HCT116 (cell line): ENCODE measurements at regions of chr6 and their contacts with region 1.

Region 1: GRCh38 chr6:119349323-119350042 is at the start of gene MAN1A1:
- DNase-seq: peak; percentile 56
- ATAC-seq: peak; percentile 90
- H3K4me3 ChIP-seq: peak within 1 kb of the TSS; percentile 82 to 86
- H3K27ac ChIP-seq: peak within 1 kb of the TSS; percentile 78
- H3K4me1 ChIP-seq: peaks cover 12 to 15% of the 10 kb centered on the region in 2 experiments
- H3K27me3 ChIP-seq: no peaks in the 10 kb centered on the region
- CTCF ChIP-seq: no peak
- POLR2A ChIP-seq: peak; percentile 72
- RAD21 ChIP-seq: peak; percentile 5; the same call in 1 of the 2 replicates
- total RNA-seq, gene MAN1A1: 46.0 TPM

Region 2: DNA sequence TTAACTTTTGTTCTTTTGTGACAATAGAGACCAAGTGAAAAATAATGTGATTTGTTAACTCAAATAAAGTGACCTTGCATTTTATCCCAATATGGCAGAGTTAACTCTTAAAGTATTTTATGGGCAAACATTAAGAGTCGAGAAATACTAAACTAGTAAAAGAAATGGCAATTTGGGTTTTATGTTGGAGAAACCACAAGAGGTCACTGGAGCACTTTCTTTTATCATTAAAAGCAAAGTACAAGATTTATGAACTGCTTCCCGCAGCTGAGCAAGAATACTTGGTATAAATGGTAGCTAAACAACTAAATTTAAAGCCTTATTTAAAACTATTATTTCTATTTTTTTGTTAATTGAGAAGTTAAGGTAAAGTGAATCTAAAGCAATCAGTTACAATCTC is 381.1 kb before region 1 on chr6:
- CTCF ChIA-PET with region 1: no interaction called
- POLR2A ChIA-PET with region 1: no interaction called
- RAD21 ChIA-PET with region 1: no interaction called
- intact Hi-C with region 1: loop called (anchors 5 kb)
- DNase-seq: peak; percentile 12
- ATAC-seq: no peak
- H3K4me3 ChIP-seq: no peak overlapping the region
- H3K27ac ChIP-seq: no peak overlapping the region
- H3K4me1 ChIP-seq: no peaks in the 10 kb centered on the region
- H3K27me3 ChIP-seq: no peaks in the 10 kb centered on the region
- CTCF ChIP-seq: peak in 2 of 3 experiments; percentile 41 to 53; a peak in 2 of 6 replicates
- POLR2A ChIP-seq: no peak
- RAD21 ChIP-seq: peak; percentile 70

Region 3: GRCh38 chr6:119105282-119105681 is 244.2 kb before region 1 on chr6:
- CTCF ChIA-PET with region 1: no interaction called
- POLR2A ChIA-PET with region 1: no interaction called
- RAD21 ChIA-PET with region 1: no interaction called
- intact Hi-C with region 1: no loop called
- DNase-seq: no peak
- ATAC-seq: no peak
- H3K4me3 ChIP-seq: no peak overlapping the region
- H3K27ac ChIP-seq: no peak overlapping the region
- H3K4me1 ChIP-seq: no peaks in the 10 kb centered on the region
- H3K27me3 ChIP-seq: no peaks in the 10 kb centered on the region
- CTCF ChIP-seq: no peak
- POLR2A ChIP-seq: no peak
- RAD21 ChIP-seq: no peak

Region 4: GRCh38 chr6:119147101-119148053 is 202.1 kb before region 1 on chr6:
- CTCF ChIA-PET with region 1: interaction called, 26 read pairs
- POLR2A ChIA-PET with region 1: interaction called, 7 read pairs
- RAD21 ChIA-PET with region 1: no interaction called
- intact Hi-C with region 1: loop called (anchors 1 kb)
- DNase-seq: peak; percentile 96
- ATAC-seq: peak; percentile 86
- H3K4me3 ChIP-seq: peak overlapping the region; percentile 1 to 41
- H3K27ac ChIP-seq: peak overlapping the region; percentile 83
- H3K4me1 ChIP-seq: peaks cover 53 to 56% of the 10 kb centered on the region in 2 experiments
- H3K27me3 ChIP-seq: no peaks in the 10 kb centered on the region
- CTCF ChIP-seq: no peak
- POLR2A ChIP-seq: peak; percentile 28
- RAD21 ChIP-seq: peak; percentile 26

Region 5: GRCh38 chr6:119552021-119552420 is 202.5 kb after region 1 on chr6:
- CTCF ChIA-PET with region 1: no interaction called
- POLR2A ChIA-PET with region 1: no interaction called
- RAD21 ChIA-PET with region 1: no interaction called
- intact Hi-C with region 1: no loop called
- DNase-seq: no peak
- ATAC-seq: no peak
- H3K4me3 ChIP-seq: no peak overlapping the region
- H3K27ac ChIP-seq: no peak overlapping the region
- H3K4me1 ChIP-seq: no peaks in the 10 kb centered on the region
- H3K27me3 ChIP-seq: no peaks in the 10 kb centered on the region
- CTCF ChIP-seq: no peak
- POLR2A ChIP-seq: no peak
- RAD21 ChIP-seq: no peak

Region 6: DNA sequence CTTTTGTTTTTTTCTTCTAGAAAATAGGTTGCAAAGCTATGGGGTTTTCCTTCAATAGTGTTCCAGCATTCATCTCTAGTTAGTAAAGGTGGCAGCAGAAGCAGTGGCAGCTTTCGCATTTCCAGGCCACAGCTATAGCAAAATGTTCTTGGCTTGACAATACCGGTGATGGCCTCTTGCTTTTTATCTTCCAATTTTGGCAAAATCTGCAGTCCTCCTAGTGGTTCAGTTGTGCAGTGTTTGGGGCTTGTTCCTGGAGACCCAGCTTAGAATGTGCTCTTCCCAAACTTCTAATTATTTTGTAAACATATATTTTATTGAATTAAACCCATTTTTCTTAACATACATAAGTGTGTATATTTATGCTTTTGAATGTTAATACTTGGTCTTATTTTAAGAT is 370.7 kb after region 1 on chr6:
- CTCF ChIA-PET with region 1: interaction called, 8 read pairs
- POLR2A ChIA-PET with region 1: no interaction called
- RAD21 ChIA-PET with region 1: interaction called in 1 of 2 experiments, 4 read pairs
- intact Hi-C with region 1: loop called (anchors 5 kb)
- DNase-seq: peak; percentile 32
- ATAC-seq: peak; percentile 85
- H3K4me3 ChIP-seq: no peak overlapping the region
- H3K27ac ChIP-seq: no peak overlapping the region
- H3K4me1 ChIP-seq: no peaks in the 10 kb centered on the region
- H3K27me3 ChIP-seq: no peaks in the 10 kb centered on the region
- CTCF ChIP-seq: peak in 2 of 3 experiments; percentile 48 to 57; a peak in 4 of 6 replicates
- POLR2A ChIP-seq: no peak
- RAD21 ChIP-seq: peak; percentile 15

Region 7: DNA sequence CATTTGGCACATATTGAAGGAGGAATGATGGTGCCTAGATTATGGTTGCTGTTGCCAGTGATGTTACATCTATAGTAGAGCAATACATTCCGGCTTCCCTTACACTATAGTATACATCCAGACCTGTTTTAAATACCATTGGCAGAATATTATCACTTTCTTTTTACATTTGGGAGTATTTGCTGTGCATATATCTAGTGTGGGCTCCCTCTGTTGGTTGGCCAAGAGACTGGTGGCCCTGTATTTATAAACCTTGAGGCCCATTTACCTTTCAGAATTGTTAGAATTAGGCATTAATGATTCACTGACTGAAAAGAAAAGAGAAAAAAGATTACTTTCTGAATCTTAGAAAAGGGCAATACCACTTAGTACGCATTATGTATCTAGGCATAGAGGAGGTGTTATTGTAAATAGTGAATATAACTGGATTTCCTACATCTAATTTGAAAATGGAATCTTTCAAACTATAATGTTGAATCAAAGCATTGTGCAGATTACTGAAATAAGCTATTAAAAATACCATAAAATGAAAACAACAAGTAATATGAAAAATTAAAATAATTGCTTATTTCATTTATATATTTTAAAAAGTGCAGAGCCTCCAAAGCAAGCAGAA is 628.9 kb after region 1 on chr6:
- CTCF ChIA-PET with region 1: interaction called, 4 read pairs
- POLR2A ChIA-PET with region 1: no interaction called
- RAD21 ChIA-PET with region 1: interaction called in 1 of 2 experiments, 3 read pairs
- intact Hi-C with region 1: loop called (anchors 5 kb)
- DNase-seq: no peak
- ATAC-seq: peak; percentile 81
- H3K4me3 ChIP-seq: no peak overlapping the region
- H3K27ac ChIP-seq: no peak overlapping the region
- H3K4me1 ChIP-seq: no peaks in the 10 kb centered on the region
- H3K27me3 ChIP-seq: no peaks in the 10 kb centered on the region
- CTCF ChIP-seq: peak; percentile 50 to 75 (median 72); a peak in 5 of 6 replicates
- POLR2A ChIP-seq: no peak
- RAD21 ChIP-seq: peak; percentile 58

Region 8: DNA sequence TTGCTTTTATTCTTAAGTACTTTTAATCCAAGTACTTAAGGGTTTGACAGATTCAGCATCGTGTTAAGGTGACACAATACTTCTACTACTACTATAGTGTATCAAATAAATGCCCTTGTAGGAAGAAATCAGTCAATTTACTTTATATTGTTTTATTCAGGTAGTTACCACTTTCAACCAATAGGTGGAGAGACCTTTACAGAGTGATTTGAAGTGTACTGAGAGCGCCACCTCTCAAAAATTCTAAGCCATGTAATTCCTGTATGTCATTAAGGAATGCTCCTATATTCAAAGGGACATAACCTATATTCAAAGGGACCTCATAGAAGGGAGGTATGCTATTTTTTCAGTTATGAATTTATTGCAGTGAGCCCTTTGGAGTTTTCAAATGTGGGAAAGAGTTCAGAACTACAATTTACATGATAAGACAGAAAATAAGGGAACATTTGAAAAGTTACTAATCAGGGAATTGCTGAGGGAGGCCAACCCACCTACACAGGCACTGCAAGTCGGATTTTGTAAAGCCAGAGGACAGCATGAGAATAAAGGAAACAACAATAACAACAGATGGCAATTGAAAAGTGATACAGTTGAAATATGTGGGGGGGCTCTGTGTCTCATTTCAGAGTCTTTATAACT is 1029.2 kb after region 1 on chr6:
- CTCF ChIA-PET with region 1: no interaction called
- POLR2A ChIA-PET with region 1: no interaction called
- RAD21 ChIA-PET with region 1: no interaction called
- intact Hi-C with region 1: loop called (anchors 10 kb)
- DNase-seq: peak; percentile 70
- ATAC-seq: peak; percentile 93
- H3K4me3 ChIP-seq: no peak overlapping the region
- H3K27ac ChIP-seq: no peak overlapping the region
- H3K4me1 ChIP-seq: no peaks in the 10 kb centered on the region
- H3K27me3 ChIP-seq: no peaks in the 10 kb centered on the region
- CTCF ChIP-seq: peak; percentile 65 to 99 (median 82)
- POLR2A ChIP-seq: no peak
- RAD21 ChIP-seq: peak; percentile 82